BJ (cell line): ENCODE measurements at regions of chr1 and their contacts with region 1.

Region 1: DNA sequence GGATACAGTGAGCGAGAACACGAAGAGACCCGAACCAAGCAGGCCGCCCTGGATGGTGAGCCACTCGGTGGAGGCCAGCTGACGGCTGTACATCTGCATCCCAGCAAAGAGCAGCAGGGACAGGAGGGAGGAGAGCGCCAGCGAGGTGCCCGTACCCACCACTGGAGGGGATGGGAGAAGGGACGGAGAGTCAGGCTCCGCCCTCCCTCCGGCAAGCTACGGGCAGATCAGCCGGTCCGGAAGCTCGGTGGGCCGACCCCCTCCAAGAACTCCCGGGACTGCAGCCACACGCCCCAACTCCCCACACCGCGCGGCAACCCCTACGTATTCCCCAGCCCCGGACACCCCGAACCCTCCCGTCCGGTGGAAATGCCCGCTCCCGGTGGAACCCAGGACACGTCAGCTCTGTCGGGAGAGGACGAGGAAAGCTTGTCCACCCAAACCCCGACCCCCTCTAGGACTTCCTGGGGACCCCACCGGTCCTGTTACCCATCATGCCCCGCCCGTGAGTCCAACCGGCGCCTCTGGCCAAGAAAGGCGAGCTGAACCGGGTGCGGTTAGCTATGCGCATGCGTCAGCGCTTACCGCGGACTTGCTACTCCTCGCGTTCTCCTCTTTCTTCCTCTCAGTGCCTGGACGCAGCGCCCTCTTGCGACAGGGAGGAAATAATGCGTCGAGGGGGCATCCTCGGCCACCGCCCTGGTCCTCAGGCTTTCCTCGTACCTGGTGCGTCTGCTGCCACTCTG is at the start of gene KRTCAP2:
- DNase-seq: peak; percentile 73
- H3K4me3 ChIP-seq: peak within 1 kb of the TSS; percentile 97
- H3K27me3 ChIP-seq: no peaks in the 10 kb centered on the region
- CTCF ChIP-seq: peak; percentile 98
- polyA plus RNA-seq, gene KRTCAP2: 211 and 225 TPM in 2 replicates

Region 2: DNA sequence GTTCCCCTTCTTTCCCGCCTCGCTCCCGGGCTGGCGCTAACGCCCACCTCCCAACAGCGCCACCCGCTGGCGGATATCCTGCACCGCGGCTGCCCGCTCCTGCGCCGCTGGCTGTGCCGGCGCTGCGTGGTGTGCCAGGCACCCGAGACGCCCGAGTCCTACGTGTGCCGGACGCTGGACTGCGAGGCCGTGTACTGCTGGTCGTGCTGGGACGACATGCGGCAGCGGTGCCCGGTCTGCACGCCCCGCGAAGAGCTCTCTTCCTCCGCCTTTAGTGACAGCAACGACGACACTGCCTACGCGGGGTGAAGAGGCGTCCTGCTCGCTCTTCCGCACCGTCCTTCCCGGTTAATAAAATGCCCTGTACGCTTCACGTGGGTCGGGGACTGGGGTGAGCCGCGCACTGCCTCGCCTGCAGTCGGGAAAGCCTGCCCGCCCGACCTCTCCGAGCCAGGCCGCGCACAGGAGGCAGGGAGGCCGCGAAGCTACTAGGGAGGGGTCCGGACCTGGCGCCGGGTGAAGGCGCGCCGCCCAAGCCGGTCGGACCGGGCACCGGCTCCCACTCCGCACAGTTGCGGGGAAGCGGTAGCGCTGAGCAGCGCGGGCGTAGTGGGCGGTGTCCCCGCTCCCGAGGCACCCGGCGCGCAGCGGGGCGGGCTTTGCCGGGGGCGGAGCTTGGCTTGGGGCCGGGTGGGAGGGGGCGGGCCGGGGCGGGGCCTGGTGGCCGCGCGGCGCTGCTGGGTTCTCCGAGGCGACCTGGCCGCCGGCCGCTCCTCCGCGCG is 122.2 kb before region 1 on chr1 and contains the start of gene ADAM15:
- CTCF ChIA-PET with region 1: interaction called, 10 read pairs
- POLR2A ChIA-PET with region 1: no interaction called
- DNase-seq: no peak
- H3K4me3 ChIP-seq: peak within 1 kb of the TSS; percentile 68
- H3K27me3 ChIP-seq: no peaks in the 10 kb centered on the region
- CTCF ChIP-seq: peak; percentile 87
- polyA plus RNA-seq, gene ADAM15: 55.1 and 88.8 TPM in 2 replicates

Region 3: DNA sequence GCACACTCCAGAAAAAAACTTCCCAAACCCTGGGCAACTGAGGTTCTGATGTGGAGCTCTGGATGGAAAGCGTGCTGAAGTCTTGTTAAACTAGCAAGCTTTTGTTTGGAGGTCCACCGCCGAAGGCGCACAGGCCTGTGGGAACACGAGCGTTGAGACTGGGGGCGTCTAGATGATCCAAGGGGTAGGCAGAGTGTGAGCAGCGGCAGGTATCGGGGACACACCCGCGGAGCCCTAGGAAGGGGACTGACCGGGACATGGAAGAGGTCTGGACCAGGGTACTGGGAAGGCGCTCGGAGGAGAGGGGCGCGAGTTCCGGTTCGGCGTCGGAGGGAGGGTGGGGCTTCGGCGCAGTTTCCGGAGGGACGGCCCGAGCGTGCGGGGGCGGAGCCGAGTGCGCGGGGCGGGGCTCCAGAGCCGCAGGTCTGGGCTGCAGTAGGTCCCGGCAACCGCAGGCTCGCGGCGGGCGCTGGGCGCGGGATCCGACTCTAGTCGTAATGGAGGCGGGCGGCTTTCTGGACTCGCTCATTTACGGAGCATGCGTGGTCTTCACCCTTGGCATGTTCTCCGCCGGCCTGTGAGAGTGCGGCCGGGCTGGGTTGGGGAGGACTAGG is 37.4 kb before region 1 on chr1 and contains the start of gene SLC50A1:
- CTCF ChIA-PET with region 1: interaction called, 19 read pairs
- POLR2A ChIA-PET with region 1: no interaction called
- DNase-seq: peak; percentile 73
- H3K4me3 ChIP-seq: peak within 1 kb of the TSS; percentile 82
- H3K27me3 ChIP-seq: no peaks in the 10 kb centered on the region
- CTCF ChIP-seq: no peak
- polyA plus RNA-seq, gene SLC50A1: 39.5 and 47.4 TPM in 2 replicates

Region 4: DNA sequence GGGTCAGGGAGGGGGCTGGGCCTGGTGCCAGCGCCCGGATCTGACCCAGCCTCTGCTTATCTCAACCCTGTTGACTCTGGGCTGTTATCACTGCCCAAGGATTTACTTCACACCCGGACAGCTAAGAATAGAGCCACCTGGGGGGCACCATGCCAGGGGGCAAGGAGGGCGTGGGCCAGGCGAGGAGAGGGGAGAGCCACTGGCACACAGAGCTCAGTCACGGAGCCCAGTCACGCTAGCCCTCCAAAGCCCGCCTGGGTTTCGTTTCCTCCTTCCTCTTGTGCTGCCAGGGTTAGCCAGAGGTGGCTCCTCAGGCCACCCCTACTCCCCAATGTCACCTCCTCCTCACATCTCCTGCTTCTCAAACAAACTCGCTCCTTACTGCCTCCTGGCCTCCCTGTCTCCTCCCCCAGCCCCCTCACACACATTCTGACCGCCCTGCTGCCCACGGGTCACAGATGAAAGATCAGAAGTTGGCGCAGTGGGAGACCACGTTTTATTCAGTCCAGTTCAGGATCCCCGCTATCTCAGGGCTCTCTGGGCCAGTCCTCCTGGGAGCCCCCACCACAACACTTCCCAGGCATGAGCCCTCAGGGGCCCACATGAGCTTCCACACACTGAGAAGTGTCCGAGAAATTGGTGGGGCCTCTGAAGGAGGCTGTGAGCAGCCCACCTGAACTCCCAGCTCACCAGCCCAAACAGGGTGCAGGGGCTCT is 12.6 kb after region 1 on chr1:
- CTCF ChIA-PET with region 1: interaction called, 32 read pairs
- POLR2A ChIA-PET with region 1: no interaction called
- DNase-seq: no peak
- H3K4me3 ChIP-seq: no peak overlapping the region
- H3K27me3 ChIP-seq: no peaks in the 10 kb centered on the region
- CTCF ChIP-seq: no peak

Region 5: GRCh38 chr1:155193275-155193990 is 20.5 kb after region 1 on chr1:
- CTCF ChIA-PET with region 1: interaction called, 147 read pairs
- POLR2A ChIA-PET with region 1: no interaction called
- DNase-seq: peak; percentile 76
- H3K4me3 ChIP-seq: peak overlapping the region; percentile 64
- H3K27me3 ChIP-seq: no peaks in the 10 kb centered on the region
- CTCF ChIP-seq: peak; percentile 99

Region 6: GRCh38 chr1:155208541-155209311 is 35.8 kb after region 1 on chr1 and contains the start of gene MTX1:
- CTCF ChIA-PET with region 1: interaction called, 23 read pairs
- POLR2A ChIA-PET with region 1: no interaction called
- DNase-seq: no peak
- H3K4me3 ChIP-seq: peak within 1 kb of the TSS; percentile 57
- H3K27me3 ChIP-seq: no peaks in the 10 kb centered on the region
- CTCF ChIP-seq: no peak
- polyA plus RNA-seq, gene MTX1: 56.5 and 72.7 TPM in 2 replicates

Region 7: DNA sequence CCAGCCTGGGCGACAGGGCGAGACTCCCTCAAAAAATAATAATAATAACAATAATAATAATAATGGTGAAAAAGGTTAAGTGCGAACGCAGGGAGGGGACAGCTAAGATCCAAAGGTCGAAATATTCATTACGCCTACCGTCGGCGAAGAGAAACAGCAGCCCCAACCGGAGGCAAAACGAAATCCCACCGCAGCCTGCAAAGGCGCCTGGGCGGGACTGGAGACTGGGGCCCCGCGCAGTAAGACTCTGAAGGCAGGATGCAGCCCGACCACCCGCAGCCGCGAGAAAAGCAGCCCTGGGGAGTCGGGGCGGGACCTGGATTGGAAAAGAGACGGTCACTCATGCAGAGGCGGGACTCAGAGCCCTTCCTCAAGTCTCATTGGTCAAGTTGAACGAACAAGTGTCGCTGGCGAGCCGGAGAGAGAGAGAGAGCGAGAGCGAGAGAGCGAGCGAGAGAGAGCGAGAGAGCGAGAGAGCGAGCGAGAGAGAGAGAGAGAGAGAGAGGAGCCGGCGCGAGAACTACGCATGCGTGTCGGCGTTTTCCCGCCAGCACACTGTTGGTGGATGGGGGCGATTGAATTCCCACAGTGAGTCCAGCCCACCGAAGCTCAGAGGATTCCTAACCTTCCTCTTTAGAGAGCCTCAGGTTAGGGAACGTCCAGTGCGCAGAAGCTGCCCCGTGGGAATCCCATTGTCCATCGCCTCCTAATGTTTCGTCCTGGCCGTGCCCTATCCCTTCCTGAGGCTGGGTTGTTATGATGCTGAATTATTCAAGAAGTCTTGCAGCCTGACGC is 71.7 kb after region 1 on chr1:
- CTCF ChIA-PET with region 1: interaction called, 10 read pairs
- POLR2A ChIA-PET with region 1: no interaction called
- DNase-seq: peak; percentile 97
- H3K4me3 ChIP-seq: peak overlapping the region; percentile 53
- H3K27me3 ChIP-seq: no peaks in the 10 kb centered on the region
- CTCF ChIP-seq: peak; percentile 21; the same call in 1 of the 2 replicates

Region 8: GRCh38 chr1:155277070-155277895 is 104.4 kb after region 1 on chr1 and contains the start of gene HCN3:
- CTCF ChIA-PET with region 1: no interaction called
- POLR2A ChIA-PET with region 1: no interaction called
- DNase-seq: peak; percentile 60
- H3K4me3 ChIP-seq: peak within 1 kb of the TSS; percentile 86
- H3K27me3 ChIP-seq: no peaks in the 10 kb centered on the region
- CTCF ChIP-seq: peak; percentile 42
- polyA plus RNA-seq, gene HCN3: 1.8 and 4.0 TPM in 2 replicates

Region 9: DNA sequence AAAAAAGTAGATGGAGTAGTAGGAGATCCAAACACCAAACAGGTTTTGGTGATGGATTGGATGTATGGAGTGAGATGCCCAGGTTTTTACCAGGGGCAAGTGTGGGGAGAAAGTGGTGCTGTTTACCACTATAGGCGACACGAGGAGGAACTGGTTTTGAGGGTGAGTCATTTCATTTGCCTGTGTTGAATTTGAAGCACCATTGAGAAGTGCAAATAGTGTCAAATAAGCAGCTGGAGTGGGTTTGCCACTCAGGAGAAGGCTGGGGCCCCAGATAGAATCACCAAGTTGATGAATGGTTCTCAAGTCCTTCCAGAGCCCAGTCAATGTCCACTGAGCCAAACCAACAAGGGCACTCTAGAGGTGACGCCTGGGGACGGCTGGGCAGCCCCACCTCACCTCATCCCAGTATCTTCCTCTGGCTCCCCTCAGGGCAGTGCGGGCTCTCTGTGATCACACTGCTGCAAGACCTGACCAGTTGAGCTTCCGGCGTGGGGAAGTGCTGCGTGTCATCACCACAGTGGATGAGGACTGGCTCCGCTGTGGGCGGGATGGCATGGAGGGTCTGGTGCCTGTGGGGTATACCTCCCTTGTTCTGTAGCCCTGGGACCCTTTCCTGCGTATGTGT is 157.2 kb after region 1 on chr1:
- CTCF ChIA-PET with region 1: no interaction called
- POLR2A ChIA-PET with region 1: no interaction called
- DNase-seq: no peak
- H3K4me3 ChIP-seq: no peak overlapping the region
- H3K27me3 ChIP-seq: no peaks in the 10 kb centered on the region
- CTCF ChIP-seq: no peak